GM12878 (cell line): ENCODE measurements at regions of chr14 and their contacts with region 1.

Region 1: DNA sequence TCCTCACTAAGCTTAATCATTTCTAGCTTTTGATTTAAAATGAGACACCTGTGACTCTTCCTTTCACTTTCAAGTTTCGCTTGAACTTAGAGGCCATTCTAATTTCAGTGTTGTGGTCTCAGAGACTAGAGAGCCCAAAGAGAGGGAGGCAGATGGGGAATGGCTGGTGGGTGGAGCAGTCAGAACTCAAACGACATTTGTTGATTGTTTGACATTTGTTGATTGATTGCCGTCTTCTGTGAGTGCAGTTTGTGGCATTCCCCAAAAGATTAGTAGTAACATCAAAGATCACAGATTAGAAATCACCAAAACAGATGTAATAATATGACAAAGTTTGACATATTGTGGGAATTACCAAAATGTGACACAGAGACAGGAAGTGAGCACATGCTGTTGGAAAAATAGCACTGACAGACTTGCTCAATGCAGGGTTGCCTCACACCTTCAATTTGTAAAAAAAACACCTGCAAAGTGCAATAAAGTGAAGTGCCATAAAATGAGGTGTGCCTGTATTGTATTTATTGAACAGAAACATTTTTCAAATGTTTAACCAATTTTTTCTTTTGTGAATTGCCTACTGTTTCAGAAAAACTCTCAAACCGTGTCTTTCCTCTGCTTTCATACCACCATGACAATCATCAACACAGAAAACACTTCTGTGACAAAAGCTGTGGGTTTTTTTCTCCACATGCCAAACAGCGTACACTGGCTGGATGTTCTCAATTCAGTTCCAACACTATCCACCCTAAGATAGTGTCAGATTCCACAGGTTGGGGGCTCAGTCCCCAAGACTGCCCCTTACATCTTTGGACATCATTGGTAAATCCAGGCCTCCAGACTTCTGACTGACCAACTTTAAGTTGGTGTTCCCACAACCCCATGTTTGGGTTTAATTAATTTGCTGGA is 376.3 kb upstream of the RGS6 start:
- DNase-seq: peak; percentile 98
- ATAC-seq: peak; percentile 87
- H3K4me3 ChIP-seq: no peak overlapping the region
- H3K27ac ChIP-seq: peak overlapping the region; percentile 98
- H3K4me1 ChIP-seq: peaks cover 49% of the 10 kb centered on the region
- H3K27me3 ChIP-seq: no peaks in the 10 kb centered on the region
- CTCF ChIP-seq: no peak
- EP300 ChIP-seq: peak; percentile 60 to 87; a peak in 3 of 4 replicates
- POLR2A ChIP-seq: no peak
- RAD21 ChIP-seq: peak; percentile 24; the same call in 1 of the 2 replicates

Region 2: DNA sequence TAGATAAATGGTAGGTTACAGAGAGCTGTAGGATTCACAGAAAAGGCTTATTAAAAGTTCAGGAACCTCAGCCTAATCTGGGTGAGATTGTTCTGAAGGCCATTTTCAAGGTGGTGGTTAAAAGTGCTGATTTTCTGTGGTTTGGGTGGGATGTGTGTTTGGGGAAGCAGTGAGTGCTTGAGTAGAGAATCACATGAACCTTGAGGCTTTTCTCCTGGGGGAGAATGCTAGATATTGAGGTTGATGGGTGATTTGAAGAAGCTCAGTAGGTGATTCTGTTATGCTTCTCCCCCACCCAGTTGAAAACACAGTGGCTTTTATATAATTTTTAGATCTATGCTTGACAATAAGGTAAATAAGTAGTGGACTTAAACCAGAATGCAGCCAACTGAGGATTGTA is 227.7 kb before region 1 on chr14:
- CTCF ChIA-PET with region 1: interaction called, 11 read pairs
- POLR2A ChIA-PET with region 1: interaction called, 15 read pairs
- RAD21 ChIA-PET with region 1: interaction called, 151 read pairs
- SMC1A ChIA-PET with region 1: interaction called, 150 read pairs
- in situ Hi-C with region 1: loop called (anchors 5 kb)
- intact Hi-C with region 1: loop called (anchors 1 kb)
- DNase-seq: peak; percentile 66
- ATAC-seq: peak; percentile 33
- H3K4me3 ChIP-seq: peak overlapping the region; percentile 18; the same call in 1 of the 2 replicates
- H3K27ac ChIP-seq: peak overlapping the region; percentile 58
- H3K4me1 ChIP-seq: peaks cover 60% of the 10 kb centered on the region
- H3K27me3 ChIP-seq: no peaks in the 10 kb centered on the region
- CTCF ChIP-seq: no peak
- EP300 ChIP-seq: peak; percentile 59 to 67; a peak in 1 of 4 replicates
- POLR2A ChIP-seq: no peak
- RAD21 ChIP-seq: no peak

Region 3: DNA sequence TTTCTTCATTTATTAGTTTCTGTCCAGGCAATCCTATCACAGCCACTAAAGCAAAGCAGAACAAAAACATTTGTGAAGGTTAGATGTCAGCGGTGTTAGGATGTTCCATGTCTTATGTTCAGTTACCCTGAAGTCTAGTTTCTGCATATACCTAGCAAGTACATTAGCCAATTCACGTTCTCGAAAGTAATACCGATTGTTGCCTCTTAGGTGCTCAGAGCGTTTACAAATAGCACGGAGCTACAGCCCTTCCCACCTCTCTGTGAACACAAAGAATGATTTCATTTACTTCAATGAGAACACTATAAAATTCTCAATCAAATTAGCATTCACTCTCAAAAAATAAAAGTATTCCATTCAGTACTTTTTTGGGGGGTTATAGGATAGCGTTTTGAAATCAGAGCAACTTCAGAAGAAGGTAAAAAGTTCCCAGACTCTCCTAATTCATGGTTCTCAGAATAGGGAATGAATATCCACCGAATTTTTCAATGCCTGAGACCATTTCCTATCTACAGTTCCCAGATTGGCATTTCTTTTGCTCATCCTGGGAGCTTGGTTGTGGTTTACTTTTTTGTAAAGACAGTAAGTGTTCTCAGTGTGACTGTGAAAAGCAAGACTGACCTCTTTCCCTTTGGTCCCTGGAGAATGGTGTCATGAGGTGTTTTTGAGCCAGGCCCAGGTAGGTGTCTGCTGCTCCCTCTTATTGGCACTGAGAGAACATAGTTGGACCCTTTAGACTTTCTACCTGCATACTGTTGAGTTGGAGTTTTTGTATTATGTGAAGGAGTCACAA is 111.7 kb before region 1 on chr14:
- CTCF ChIA-PET with region 1: interaction called, 4 read pairs
- POLR2A ChIA-PET with region 1: interaction called, 8 read pairs
- RAD21 ChIA-PET with region 1: interaction called, 9 read pairs
- SMC1A ChIA-PET with region 1: interaction called, 14 read pairs
- in situ Hi-C with region 1: no loop called
- intact Hi-C with region 1: no loop called
- DNase-seq: peak; percentile 40
- ATAC-seq: peak; percentile 69
- H3K4me3 ChIP-seq: no peak overlapping the region
- H3K27ac ChIP-seq: no peak overlapping the region
- H3K4me1 ChIP-seq: peaks cover under 1% of the 10 kb centered on the region; the same call in 1 of the 2 replicates
- H3K27me3 ChIP-seq: no peaks in the 10 kb centered on the region
- CTCF ChIP-seq: no peak
- EP300 ChIP-seq: peak; percentile 38 to 47; a peak in 2 of 4 replicates
- POLR2A ChIP-seq: no peak
- RAD21 ChIP-seq: no peak

Region 4: DNA sequence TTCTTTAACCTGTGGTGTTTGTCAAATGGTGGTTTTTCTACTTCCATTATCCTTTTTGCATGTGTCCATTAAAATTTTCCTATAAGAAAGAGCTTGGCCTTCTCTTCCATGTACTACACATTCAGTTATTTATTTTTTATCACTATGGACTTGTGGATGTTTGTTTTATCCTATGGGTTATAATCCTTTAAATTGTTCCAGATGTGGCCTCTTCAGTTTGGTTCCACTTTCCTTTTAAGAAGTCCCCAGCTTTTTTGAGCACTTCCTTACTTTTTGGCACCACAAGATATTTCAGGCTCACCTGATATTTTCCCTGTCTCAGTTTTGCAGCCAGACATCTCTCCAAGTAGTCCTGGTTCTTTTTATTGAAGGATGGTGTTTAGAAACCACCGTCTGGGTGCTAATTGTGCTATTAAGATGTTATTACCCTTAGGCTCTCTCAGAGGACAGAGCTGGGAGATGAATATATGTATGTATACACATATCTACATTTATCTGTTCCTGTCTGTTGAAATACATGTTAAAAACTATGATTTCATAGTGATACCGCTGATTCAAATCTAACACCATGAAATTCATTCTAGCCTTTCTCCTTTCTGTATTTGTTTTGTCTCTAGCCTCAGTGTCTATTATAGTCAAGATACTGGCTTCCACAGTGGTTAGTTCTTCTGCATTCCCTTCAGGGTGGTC is 32.1 kb before region 1 on chr14:
- CTCF ChIA-PET with region 1: interaction called, 5 read pairs
- POLR2A ChIA-PET with region 1: interaction called, 8 read pairs
- RAD21 ChIA-PET with region 1: interaction called, 17 read pairs
- SMC1A ChIA-PET with region 1: interaction called, 108 read pairs
- in situ Hi-C with region 1: no loop called
- intact Hi-C with region 1: loop called (anchors 1 kb)
- DNase-seq: peak; percentile 76
- ATAC-seq: peak; percentile 91
- H3K4me3 ChIP-seq: peak overlapping the region; percentile 22; the same call in 1 of the 2 replicates
- H3K27ac ChIP-seq: peak overlapping the region; percentile 72
- H3K4me1 ChIP-seq: peaks cover 26% of the 10 kb centered on the region
- H3K27me3 ChIP-seq: no peaks in the 10 kb centered on the region
- CTCF ChIP-seq: no peak
- EP300 ChIP-seq: peak; percentile 82 to 95
- POLR2A ChIP-seq: no peak
- RAD21 ChIP-seq: no peak

Region 5: GRCh38 chr14:71597955-71598660 is 42.2 kb after region 1 on chr14:
- CTCF ChIA-PET with region 1: no interaction called
- POLR2A ChIA-PET with region 1: interaction called, 10 read pairs
- RAD21 ChIA-PET with region 1: interaction called, 30 read pairs
- SMC1A ChIA-PET with region 1: interaction called, 28 read pairs
- in situ Hi-C with region 1: no loop called
- intact Hi-C with region 1: loop called (anchors 2 kb)
- DNase-seq: no peak
- ATAC-seq: peak; percentile 94
- H3K4me3 ChIP-seq: no peak overlapping the region
- H3K27ac ChIP-seq: peak overlapping the region; percentile 71
- H3K4me1 ChIP-seq: peaks cover 18% of the 10 kb centered on the region
- H3K27me3 ChIP-seq: no peaks in the 10 kb centered on the region
- CTCF ChIP-seq: no peak
- EP300 ChIP-seq: peak; percentile 48 to 54; a peak in 3 of 4 replicates
- POLR2A ChIP-seq: no peak
- RAD21 ChIP-seq: no peak

Region 6: DNA sequence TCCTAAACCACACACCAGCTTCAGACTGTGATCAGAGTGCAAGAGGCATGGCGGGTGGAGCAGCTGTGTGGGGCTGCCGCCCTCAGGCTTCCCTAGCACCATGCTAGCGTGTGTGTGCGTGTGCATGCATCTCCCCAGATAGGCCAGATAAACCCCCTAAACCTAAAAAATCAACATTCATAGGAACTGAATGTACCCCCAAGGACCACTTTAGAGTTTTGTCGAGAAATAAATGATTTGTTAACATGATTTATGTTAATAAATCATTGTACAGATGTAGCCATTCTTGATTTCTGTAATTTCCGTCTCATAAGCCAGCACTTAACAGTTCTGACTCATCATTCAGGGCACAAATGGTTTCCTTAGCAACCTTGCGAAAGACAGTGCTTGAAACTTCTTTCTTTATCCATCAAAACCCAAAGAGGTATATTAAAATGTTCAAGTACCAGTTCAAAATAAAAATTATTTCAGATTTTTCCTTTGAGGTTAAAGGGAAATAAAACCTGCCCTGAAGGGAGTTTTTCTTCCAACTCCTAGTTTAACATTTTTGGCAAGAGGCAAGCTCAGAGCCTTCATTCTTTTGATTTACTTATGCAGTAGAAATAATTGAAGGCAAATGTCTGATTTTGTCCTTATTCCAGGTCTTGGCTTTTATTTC is 170.1 kb after region 1 on chr14:
- CTCF ChIA-PET with region 1: no interaction called
- POLR2A ChIA-PET with region 1: no interaction called
- RAD21 ChIA-PET with region 1: no interaction called
- SMC1A ChIA-PET with region 1: no interaction called
- in situ Hi-C with region 1: no loop called
- intact Hi-C with region 1: no loop called
- DNase-seq: no peak
- ATAC-seq: no peak
- H3K4me3 ChIP-seq: no peak overlapping the region
- H3K27ac ChIP-seq: no peak overlapping the region
- H3K4me1 ChIP-seq: no peaks in the 10 kb centered on the region
- H3K27me3 ChIP-seq: no peaks in the 10 kb centered on the region
- CTCF ChIP-seq: no peak
- EP300 ChIP-seq: no peak
- POLR2A ChIP-seq: no peak
- RAD21 ChIP-seq: no peak

Region 7: GRCh38 chr14:71855399-71856036 is 299.6 kb after region 1 on chr14:
- CTCF ChIA-PET with region 1: no interaction called
- POLR2A ChIA-PET with region 1: no interaction called
- RAD21 ChIA-PET with region 1: interaction called, 10 read pairs
- SMC1A ChIA-PET with region 1: no interaction called
- in situ Hi-C with region 1: no loop called
- intact Hi-C with region 1: no loop called
- DNase-seq: peak; percentile 31
- ATAC-seq: peak; percentile 85
- H3K4me3 ChIP-seq: no peak overlapping the region
- H3K27ac ChIP-seq: peak overlapping the region; percentile 58; the same call in 1 of the 2 replicates
- H3K4me1 ChIP-seq: peaks cover 10% of the 10 kb centered on the region
- H3K27me3 ChIP-seq: no peaks in the 10 kb centered on the region
- CTCF ChIP-seq: peak; percentile 68 to 77 (median 71)
- EP300 ChIP-seq: no peak
- POLR2A ChIP-seq: no peak
- RAD21 ChIP-seq: peak; percentile 78